ENCODE measurements at regions of chr10 and their contacts with region 1.

Region 1: DNA sequence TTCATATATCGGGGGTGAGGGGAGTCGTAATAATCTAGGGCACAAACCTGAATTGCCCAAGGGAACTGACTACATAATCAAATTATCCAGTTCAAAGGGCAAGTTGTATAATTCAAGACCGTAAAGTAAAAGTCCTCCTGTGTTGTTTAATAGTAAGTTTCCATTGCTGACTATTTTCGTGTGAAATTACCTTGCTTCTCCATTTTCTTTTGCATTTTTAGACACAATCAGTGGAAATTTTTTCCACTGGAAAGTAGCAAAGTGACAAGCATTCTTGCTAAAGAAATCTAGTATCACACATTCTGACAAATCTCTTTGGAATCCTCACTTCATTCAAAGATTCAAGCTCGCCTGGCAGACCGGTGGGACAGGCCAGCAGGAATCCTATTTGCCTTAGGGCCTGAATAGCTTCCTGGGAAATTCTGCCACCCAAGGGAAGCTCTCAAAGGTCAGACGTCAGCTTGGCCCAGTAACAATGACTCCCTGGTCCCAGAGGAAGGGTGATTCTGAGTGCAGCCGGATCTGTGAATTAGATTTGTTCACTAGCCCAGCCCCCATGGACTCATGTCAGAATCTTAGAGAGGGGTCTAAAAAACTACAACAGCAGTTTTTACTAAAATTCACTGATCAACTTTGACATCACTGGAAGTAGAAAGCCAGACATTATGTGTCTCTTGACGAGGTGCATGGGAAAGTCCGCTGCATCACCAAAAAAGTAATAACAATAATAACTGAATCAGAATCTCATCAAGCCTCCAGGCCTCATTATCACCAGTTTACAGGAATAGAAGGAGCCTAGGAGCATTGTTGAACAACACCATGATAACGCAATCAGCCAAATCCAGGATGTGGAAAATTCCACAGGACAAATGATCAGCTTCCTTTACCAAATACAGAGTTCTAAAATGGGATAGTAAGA is 161.0 kb downstream of the SKIDA1 start:
- DNase-seq: no peak
- H3K4me3 ChIP-seq: no peak overlapping the region
- H3K27ac ChIP-seq: peak overlapping the region; percentile 46 to 73
- H3K4me1 ChIP-seq: no peaks in the 10 kb centered on the region
- H3K27me3 ChIP-seq: no peaks in the 10 kb centered on the region
- CTCF ChIP-seq: no peak
- POLR2A ChIP-seq: no peak

Region 2: GRCh38 chr10:21315645-21316281 is 48.7 kb before region 1 on chr10:
- intact Hi-C with region 1: loop called (anchors 10 kb)
- DNase-seq: peak; percentile 72 to 73
- H3K4me3 ChIP-seq: no peak overlapping the region
- H3K27ac ChIP-seq: peak overlapping the region; percentile 36 to 50
- H3K4me1 ChIP-seq: peaks cover 6 to 9% of the 10 kb centered on the region in 2 donors
- H3K27me3 ChIP-seq: no peaks in the 10 kb centered on the region
- CTCF ChIP-seq: no peak
- POLR2A ChIP-seq: no peak